ENCODE measurements at regions of chr19 and their contacts with region 1.

Region 1: DNA sequence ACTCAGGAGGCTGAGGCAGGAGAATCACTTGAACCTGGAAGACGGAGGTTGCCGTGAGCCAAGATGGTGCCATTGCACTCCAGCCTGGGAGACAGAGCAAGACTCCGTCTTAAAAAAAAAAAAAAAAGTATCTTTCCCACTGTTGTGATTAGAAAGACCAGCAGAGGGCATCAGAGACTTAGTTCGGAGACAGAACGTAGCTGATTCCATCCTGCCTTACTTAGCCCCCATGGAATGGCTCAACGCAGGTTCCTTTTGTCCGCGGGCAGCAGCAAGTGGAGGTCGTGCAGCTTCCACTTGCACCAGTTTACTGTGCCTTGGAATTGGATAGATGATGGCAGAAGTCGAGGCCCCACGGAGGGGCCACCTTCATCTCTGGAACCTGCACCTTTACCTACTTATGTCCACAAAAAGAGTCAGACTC is 8.1 kb downstream of the TIMM29 start:
- DNase-seq: peak; percentile 88
- H3K4me3 ChIP-seq: no peak overlapping the region
- H3K27ac ChIP-seq: no peak overlapping the region
- H3K4me1 ChIP-seq: peaks cover 31% of the 10 kb centered on the region
- CTCF ChIP-seq: peak; percentile 79

Region 2: DNA sequence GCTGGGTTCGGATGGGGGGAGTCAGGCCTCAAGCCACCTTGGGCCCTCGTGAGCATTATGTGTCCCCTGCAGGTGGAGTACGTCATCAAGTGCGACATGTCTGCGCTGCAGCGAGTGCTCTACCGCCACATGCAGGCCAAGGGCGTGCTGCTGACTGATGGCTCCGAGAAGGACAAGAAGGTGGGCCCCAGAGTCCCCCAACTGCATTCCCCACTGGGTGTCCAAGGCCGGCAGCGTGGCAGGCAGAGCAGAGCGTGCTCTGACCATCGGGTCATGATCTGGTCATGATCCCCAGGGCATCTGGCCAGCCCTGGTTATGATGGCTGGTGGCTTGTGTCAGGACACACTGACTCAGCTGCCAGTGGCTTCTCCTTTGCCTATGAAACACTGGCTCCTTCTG is 87.6 kb after region 1 on chr19:
- CTCF ChIA-PET with region 1: interaction called, 12 read pairs
- POLR2A ChIA-PET with region 1: no interaction called
- intact Hi-C with region 1: no loop called
- DNase-seq: no peak
- H3K4me3 ChIP-seq: no peak overlapping the region
- H3K27ac ChIP-seq: no peak overlapping the region
- H3K4me1 ChIP-seq: no peaks in the 10 kb centered on the region
- CTCF ChIP-seq: no peak

Region 3: GRCh38 chr19:11041966-11042627 is 105.4 kb after region 1 on chr19:
- CTCF ChIA-PET with region 1: no interaction called
- POLR2A ChIA-PET with region 1: no interaction called
- intact Hi-C with region 1: loop called (anchors 2 kb)
- DNase-seq: no peak
- H3K4me3 ChIP-seq: no peak overlapping the region
- H3K27ac ChIP-seq: no peak overlapping the region
- H3K4me1 ChIP-seq: peaks cover 20% of the 10 kb centered on the region
- CTCF ChIP-seq: no peak

Region 4: GRCh38 chr19:11090054-11090900 is 153.6 kb after region 1 on chr19:
- CTCF ChIA-PET with region 1: interaction called, 3 read pairs
- POLR2A ChIA-PET with region 1: no interaction called
- intact Hi-C with region 1: loop called (anchors 5 kb)
- DNase-seq: peak; percentile 98
- H3K4me3 ChIP-seq: peak overlapping the region; percentile 82
- H3K27ac ChIP-seq: peak overlapping the region; percentile 91
- H3K4me1 ChIP-seq: peaks cover 48% of the 10 kb centered on the region
- CTCF ChIP-seq: no peak; the same call in 1 of the 2 replicates

Region 5: GRCh38 chr19:11115895-11116446 is 179.3 kb after region 1 on chr19:
- CTCF ChIA-PET with region 1: no interaction called
- POLR2A ChIA-PET with region 1: no interaction called
- intact Hi-C with region 1: no loop called
- DNase-seq: no peak
- H3K4me3 ChIP-seq: no peak overlapping the region
- H3K27ac ChIP-seq: no peak overlapping the region
- H3K4me1 ChIP-seq: no peaks in the 10 kb centered on the region
- CTCF ChIP-seq: no peak

Region 6: DNA sequence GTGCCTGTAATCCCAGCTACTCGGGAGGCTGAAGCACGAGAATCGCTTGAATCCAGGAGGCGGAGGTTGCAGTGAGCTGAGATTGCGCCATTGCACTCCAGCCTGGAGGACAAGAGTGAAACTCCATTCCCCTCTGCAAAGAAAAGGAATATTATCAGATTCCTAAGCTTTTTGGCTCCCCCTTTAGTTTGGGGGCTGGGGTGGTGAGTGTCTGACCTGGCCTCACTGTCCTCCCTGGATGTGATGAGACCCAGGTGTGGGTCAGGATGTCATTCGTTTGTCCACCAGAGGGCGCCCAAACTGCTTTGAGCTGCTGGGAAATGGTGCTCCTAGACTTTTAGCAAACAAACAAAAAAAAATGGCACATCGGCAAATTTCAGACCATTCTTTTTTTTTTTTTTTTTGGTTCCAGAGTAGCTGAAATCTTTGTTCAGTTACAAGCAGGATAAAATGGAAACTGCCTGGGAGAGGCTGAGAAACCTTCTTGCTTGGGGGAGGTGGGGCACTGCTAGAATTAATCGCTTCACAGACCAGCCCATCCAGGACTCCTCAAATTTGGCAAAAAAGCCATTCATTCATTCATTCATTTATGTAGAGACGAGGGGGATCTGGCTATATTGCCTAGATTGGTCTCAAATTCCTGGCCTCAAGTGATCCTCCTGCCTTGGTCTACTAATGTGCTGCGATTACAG is 189.5 kb after region 1 on chr19:
- CTCF ChIA-PET with region 1: interaction called, 3 read pairs
- POLR2A ChIA-PET with region 1: no interaction called
- intact Hi-C with region 1: loop called (anchors 2 kb)
- DNase-seq: peak; percentile 82
- H3K4me3 ChIP-seq: no peak overlapping the region
- H3K27ac ChIP-seq: no peak overlapping the region
- H3K4me1 ChIP-seq: no peaks in the 10 kb centered on the region
- CTCF ChIP-seq: peak; percentile 90

Region 7: DNA sequence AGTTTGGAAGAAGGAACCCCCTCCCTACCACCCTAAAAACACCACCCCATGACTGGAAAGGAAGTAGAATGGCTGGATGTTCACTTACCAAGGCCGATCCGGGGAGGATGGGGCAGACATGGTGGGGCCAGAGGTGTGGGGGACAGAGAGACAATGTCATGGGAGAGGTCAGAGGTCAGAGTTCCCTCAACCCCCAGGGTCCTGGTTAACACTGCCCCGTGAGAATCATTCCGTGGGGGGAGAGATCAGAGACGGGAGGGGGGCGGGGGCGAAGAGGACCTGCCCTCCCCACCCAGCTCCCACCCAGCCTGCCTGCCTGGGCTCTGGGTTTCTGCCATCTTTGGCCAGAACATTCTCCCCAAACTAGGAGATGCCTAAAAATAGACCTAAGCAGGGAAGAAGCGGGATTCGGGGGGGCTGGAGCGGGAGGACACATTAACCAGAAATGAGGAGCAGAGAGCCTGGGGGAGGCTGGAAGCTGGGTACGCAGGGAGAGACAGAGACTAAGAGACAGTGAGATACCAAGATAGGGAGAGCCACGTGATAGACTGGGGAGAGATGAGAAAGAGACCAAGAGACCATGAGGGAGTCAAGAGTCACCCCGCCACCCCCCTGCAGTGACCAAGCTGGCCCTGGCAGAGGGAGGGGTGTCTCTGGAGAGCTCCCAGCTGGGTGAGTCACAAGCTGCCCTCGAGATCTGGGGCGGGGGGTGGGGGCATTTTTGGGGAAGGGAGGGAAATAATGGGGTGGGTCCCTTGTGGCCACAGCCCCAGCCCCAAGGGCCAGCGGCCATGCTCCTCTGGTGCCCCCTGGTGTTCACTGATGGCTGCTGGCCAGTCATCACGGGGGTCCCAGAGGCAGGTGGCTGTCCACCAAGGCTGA is 266.8 kb after region 1 on chr19:
- CTCF ChIA-PET with region 1: no interaction called
- POLR2A ChIA-PET with region 1: interaction called, 5 read pairs
- intact Hi-C with region 1: loop called (anchors 5 kb)
- DNase-seq: peak; percentile 58
- H3K4me3 ChIP-seq: no peak overlapping the region
- H3K27ac ChIP-seq: no peak overlapping the region
- H3K4me1 ChIP-seq: peaks cover 51% of the 10 kb centered on the region
- CTCF ChIP-seq: peak; percentile 83

Measured in OCI-LY7 (cell line).